Vagina (tissue), 2 donors: ENCODE measurements at regions of chr7 and their contacts with region 1.

Region 1: GRCh38 chr7:23712368-23713284 is 2.6 kb downstream of the STK31 start:
- DNase-seq: no peak
- H3K4me3 ChIP-seq: no peak overlapping the region
- H3K27ac ChIP-seq: no peak overlapping the region
- H3K4me1 ChIP-seq: no peaks in the 10 kb centered on the region
- H3K27me3 ChIP-seq: no peaks in the 10 kb centered on the region
- CTCF ChIP-seq: peak; percentile 25 to 48 (median 44)
- POLR2A ChIP-seq: no peak

Region 2: GRCh38 chr7:23570592-23571200 is 141.9 kb before region 1 on chr7:
- intact Hi-C with region 1: loop called (anchors 5 kb)
- DNase-seq: no peak
- H3K4me3 ChIP-seq: no peak overlapping the region
- H3K27ac ChIP-seq: no peak overlapping the region
- H3K4me1 ChIP-seq: no peaks in the 10 kb centered on the region
- H3K27me3 ChIP-seq: no peaks in the 10 kb centered on the region
- CTCF ChIP-seq: peak; percentile 67 to 87 (median 85)
- POLR2A ChIP-seq: no peak

Region 3: DNA sequence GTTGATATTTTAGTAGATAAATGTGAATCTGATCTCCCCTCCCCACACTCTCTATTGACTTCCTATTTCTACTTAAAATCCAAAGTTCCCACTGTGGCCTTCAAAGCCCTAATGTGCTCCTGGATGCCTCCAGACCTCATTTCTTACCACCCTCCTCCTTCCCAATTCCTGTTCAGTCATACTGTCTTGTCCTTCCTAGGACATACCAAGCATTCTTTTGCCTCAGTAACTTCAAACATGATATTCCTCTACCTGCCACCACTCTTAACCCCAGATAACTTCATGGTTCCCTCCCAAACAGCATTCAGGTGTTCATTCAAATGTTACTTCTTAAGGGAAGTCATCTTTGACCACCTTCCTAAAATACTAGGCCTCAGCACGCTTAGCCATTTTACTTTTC is 66.8 kb before region 1 on chr7:
- intact Hi-C with region 1: no loop called
- DNase-seq: no peak
- H3K4me3 ChIP-seq: no peak overlapping the region
- H3K27ac ChIP-seq: no peak overlapping the region
- H3K4me1 ChIP-seq: no peaks in the 10 kb centered on the region
- H3K27me3 ChIP-seq: no peaks in the 10 kb centered on the region
- CTCF ChIP-seq: no peak
- POLR2A ChIP-seq: no peak